ENCODE measurements at regions of chr6 and their contacts with region 1.

Region 1: GRCh38 chr6:12605888-12606345 is 110.7 kb upstream of the PHACTR1 start:
- DNase-seq: no peak
- H3K4me3 ChIP-seq: no peak overlapping the region
- H3K27ac ChIP-seq: no peak overlapping the region
- H3K4me1 ChIP-seq: peaks cover 0 to 14% (median 4%) of the 10 kb centered on the region in 4 donors
- H3K27me3 ChIP-seq: no peaks in the 10 kb centered on the region
- CTCF ChIP-seq: peak in 3 of 4 experiments; percentile 52 to 72 (median 66)
- EP300 ChIP-seq: no peak
- POLR2A ChIP-seq: no peak

Region 2: DNA sequence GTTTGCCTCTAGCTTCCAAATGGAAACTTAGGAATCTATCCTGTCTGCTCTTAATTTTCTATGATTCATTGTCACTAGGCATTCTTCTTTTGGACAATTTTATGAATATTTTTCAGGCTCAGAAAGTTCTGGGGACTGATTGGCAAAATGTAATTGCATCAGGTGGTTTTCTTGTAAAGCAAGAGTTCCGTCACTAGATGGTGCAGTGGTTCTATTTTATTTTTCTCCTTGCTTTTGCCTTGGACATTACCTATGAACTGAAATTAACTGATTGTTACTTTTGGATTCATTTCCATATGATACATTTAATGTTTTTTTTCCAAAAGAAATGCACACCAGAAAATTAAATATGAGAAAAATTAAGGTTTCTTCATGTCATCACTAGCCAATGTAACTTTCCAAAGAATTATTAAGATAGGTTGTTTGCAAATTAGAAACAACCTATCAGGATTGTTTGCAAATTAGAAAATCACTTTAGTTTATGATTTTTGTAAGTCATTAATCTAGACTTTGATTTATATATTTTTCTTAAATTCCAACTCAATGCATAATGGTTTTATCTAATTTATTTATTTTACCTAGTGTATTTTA is 1020.4 kb before region 1 on chr6:
- intact Hi-C with region 1: loop called (anchors 5 kb)
- DNase-seq: no peak
- H3K4me3 ChIP-seq: no peak overlapping the region
- H3K27ac ChIP-seq: peak overlapping the region in 1 of 4 donors; percentile 37
- H3K4me1 ChIP-seq: peaks cover 0 to 24% (median 17%) of the 10 kb centered on the region in 4 donors
- H3K27me3 ChIP-seq: no peaks in the 10 kb centered on the region
- CTCF ChIP-seq: peak in 3 of 4 experiments; percentile 42 to 47 (median 45)
- EP300 ChIP-seq: no peak
- POLR2A ChIP-seq: no peak

Region 3: DNA sequence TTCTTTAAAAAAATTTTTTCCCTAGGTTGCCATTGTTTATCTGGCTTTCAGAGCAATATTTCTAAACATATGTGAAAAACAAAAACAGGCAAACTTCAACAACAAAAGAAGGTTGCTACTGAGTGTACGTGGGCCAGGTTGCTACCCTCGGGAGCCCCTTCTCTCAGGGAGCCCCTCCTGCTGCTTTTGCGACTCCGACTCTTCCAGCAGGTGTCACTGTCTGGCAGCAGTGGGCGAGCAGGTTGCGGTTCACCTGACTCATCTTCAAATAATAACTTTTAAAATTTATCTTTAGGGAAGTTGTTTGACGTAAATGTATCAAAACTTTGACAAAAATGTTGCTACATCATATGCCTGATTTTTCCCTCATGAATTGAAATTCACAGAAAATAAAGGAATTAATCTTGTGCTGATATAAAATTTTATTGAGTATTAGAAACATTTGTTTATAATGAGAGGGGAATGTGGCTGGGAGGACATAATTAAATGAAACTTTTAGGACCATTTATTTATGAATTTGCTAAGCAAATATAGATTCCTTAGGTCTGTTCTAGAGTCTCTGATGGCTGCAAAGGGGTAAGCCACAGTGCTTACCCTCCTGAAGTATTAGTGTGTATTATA is 455.0 kb before region 1 on chr6:
- intact Hi-C with region 1: loop called (anchors 10 kb)
- DNase-seq: no peak
- H3K4me3 ChIP-seq: no peak overlapping the region
- H3K27ac ChIP-seq: no peak overlapping the region
- H3K4me1 ChIP-seq: peaks cover 0 to 19% (median 5%) of the 10 kb centered on the region in 4 donors
- H3K27me3 ChIP-seq: no peaks in the 10 kb centered on the region
- CTCF ChIP-seq: peak in 3 of 4 experiments; percentile 25 to 41 (median 40)
- EP300 ChIP-seq: no peak
- POLR2A ChIP-seq: no peak

Region 4: GRCh38 chr6:12289933-12290820 is 315.7 kb before region 1 on chr6 and contains the start of gene EDN1:
- intact Hi-C with region 1: loop called (anchors 2 kb)
- DNase-seq: peak; percentile 85
- H3K4me3 ChIP-seq: peak within 1 kb of the TSS; percentile 32 to 53 (median 50)
- H3K27ac ChIP-seq: peak within 1 kb of the TSS; percentile 64 to 80 (median 72)
- H3K4me1 ChIP-seq: peaks cover 0 to 33% (median 12%) of the 10 kb centered on the region in 4 donors
- H3K27me3 ChIP-seq: no peaks in the 10 kb centered on the region
- CTCF ChIP-seq: peak; percentile 24 to 70 (median 50)
- EP300 ChIP-seq: no peak
- POLR2A ChIP-seq: peak in 1 of 2 donors; percentile 50
- total RNA-seq, gene EDN1: 4.9 to 9.5 (median 7.2) TPM

Region 5: DNA sequence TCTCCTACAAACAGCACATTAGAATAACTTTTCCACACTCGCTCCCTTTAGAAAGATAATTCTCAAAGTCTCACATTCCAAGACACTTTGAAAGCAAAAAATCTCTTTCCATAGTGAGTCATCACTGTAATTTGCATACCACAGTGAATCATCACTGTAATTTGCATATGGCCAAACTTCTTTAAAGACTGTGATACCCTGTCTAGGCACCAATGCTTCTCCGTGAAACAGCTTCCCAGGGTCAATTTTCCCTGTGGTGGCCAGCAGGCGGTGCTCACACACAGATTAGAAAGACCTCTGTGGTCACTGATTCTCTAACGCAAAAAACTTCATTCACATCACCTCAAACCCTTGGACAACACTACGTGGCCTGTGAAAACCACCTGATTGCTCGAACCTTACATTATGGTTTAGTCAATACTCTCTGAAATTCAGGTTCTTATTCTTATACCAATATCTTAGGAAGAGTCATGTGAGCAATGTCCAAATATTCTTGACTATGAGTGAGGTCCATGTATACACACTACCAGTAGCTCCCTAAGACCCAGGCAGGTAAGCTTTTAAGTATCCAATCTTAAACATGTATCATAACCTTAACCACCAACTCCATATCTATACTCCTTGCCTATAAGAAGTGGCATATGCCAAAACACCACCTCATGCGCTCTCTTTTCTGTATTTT is 32.2 kb after region 1 on chr6:
- intact Hi-C with region 1: no loop called
- DNase-seq: no peak
- H3K4me3 ChIP-seq: no peak overlapping the region
- H3K27ac ChIP-seq: no peak overlapping the region
- H3K4me1 ChIP-seq: no peaks in the 10 kb centered on the region
- H3K27me3 ChIP-seq: no peaks in the 10 kb centered on the region
- CTCF ChIP-seq: peak in 3 of 4 experiments; percentile 28 to 49 (median 32)
- EP300 ChIP-seq: no peak
- POLR2A ChIP-seq: no peak

Measured in sigmoid colon (tissue), 7 donors.